PC-9 (cell line): ENCODE measurements at regions of chr22 and their contacts with region 1.

Region 1: DNA sequence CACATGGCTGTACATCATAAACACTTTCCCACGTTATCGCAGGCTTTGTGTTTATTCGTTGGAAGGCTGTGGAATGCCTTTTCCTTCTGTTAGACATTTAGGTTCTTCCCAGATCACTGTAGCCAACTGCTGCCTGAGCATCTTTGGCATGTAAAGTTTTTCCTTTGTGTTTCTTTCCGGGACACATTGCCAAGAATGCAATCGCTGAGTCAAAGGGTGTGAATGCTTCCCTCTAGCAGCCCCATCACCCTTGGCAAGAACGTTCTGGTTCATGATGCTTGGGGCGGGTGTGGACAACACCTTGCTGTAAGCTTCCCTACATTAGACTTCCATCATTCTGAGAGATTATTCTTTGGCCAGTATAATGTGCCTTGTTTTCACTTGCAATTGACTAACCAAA is 136.2 kb downstream of the OSBP2 start:
- DNase-seq: peak; percentile 84 to 98
- H3K4me3 ChIP-seq: no peak overlapping the region
- H3K27ac ChIP-seq: peak overlapping the region; percentile 98
- H3K4me1 ChIP-seq: peaks cover 44% of the 10 kb centered on the region
- H3K27me3 ChIP-seq: no peaks in the 10 kb centered on the region
- CTCF ChIP-seq: no peak

Region 2: DNA sequence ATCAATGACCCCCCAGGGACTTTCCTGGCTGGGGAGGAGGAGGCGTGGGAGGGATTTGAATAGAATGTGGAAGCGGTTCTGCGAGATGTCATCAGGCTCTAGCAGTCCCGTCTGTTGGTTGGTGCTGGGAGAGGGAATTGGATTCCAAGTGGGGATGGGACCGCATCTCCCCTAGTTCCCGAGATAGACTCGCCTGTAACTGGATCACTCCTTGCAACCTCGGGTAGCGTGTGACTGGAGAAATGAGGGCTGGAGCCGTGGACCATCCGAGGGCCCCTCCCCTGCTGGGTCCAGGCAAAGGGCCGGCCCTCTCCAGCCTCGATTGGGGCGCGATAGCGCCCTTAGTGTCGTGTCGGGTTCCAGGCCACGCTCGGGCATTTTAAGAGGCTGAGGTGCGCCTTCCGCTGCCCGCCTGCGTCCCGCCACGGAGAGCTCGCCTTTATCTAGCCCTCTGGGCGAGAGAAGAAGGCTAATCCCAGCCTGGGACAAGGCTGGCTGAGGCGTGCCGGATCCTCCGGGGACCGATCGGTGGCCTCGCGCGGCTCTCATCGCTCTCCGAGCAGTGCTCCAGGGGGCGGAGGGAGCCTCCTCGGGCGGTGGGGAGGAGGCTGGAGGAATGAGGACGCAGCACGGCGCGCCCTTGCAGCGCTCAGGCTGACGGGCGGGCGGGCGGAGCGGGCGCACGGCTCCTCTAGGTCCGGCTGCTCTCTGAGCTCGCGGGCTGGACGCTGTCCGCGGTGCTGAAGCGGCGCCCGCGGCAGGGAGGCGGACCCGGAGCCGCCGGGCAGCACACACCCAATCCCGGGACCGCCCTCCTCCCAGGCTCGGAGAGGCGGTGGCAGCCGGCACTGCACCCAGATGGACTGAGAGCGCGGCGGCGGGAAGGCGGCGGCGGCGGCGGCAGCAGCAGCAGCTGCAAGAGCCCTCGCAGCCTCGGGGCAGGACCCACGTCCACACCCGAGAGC is 28.4 kb before region 1 on chr22:
- CTCF ChIA-PET with region 1: no interaction called
- POLR2A ChIA-PET with region 1: no interaction called
- intact Hi-C with region 1: loop called (anchors 2 kb)
- DNase-seq: peak; percentile 89 to 95
- H3K4me3 ChIP-seq: peak overlapping the region; percentile 60; the same call in 1 of the 2 replicates
- H3K27ac ChIP-seq: no peak overlapping the region
- H3K4me1 ChIP-seq: peaks cover 49% of the 10 kb centered on the region
- H3K27me3 ChIP-seq: peaks cover 17% of the 10 kb centered on the region
- CTCF ChIP-seq: no peak; the same call in 1 of the 2 replicates

Region 3: GRCh38 chr22:30881361-30882183 is 50.7 kb after region 1 on chr22:
- CTCF ChIA-PET with region 1: no interaction called
- POLR2A ChIA-PET with region 1: interaction called, 3 read pairs
- intact Hi-C with region 1: loop called (anchors 1 kb)
- DNase-seq: no peak
- H3K4me3 ChIP-seq: no peak overlapping the region
- H3K27ac ChIP-seq: peak overlapping the region; percentile 72
- H3K4me1 ChIP-seq: peaks cover 32% of the 10 kb centered on the region
- H3K27me3 ChIP-seq: no peaks in the 10 kb centered on the region
- CTCF ChIP-seq: no peak

Region 4: DNA sequence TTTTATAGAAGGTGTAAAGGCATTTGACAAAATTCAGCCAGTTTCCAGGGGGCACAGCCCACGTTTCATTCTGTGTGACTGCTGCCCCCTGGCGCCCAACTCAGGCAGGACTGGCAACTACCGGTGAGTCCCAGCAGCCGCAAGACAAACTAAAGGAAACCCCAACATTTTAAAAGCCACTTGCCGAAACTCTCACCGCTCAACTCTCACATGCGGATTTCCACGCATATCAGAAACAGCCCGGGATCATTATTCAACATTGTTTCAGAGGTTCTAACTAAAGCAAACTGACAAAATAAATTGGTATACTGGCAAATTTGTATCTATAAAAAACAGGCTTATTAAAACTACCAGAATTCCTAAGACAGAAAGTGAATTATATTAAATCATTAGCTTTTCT is 89.5 kb after region 1 on chr22:
- CTCF ChIA-PET with region 1: interaction called, 6 read pairs
- POLR2A ChIA-PET with region 1: no interaction called
- intact Hi-C with region 1: loop called (anchors 1 kb)
- DNase-seq: peak; percentile 46 to 74
- H3K4me3 ChIP-seq: no peak overlapping the region
- H3K27ac ChIP-seq: no peak overlapping the region
- H3K4me1 ChIP-seq: no peaks in the 10 kb centered on the region
- H3K27me3 ChIP-seq: no peaks in the 10 kb centered on the region
- CTCF ChIP-seq: peak; percentile 98